Sigmoid colon (tissue), 7 donors: ENCODE measurements at regions of chr2 and their contacts with region 1.

Region 1: GRCh38 chr2:67476809-67477790 is 80.0 kb downstream of the ETAA1 start:
- DNase-seq: peak; percentile 64
- H3K4me3 ChIP-seq: no peak overlapping the region
- H3K27ac ChIP-seq: peak overlapping the region in 2 of 4 donors; percentile 56 to 66
- H3K4me1 ChIP-seq: peaks cover 0 to 26% (median 18%) of the 10 kb centered on the region in 4 donors
- H3K27me3 ChIP-seq: no peaks in the 10 kb centered on the region
- CTCF ChIP-seq: peak in 3 of 4 experiments; percentile 34 to 47 (median 37)
- EP300 ChIP-seq: no peak
- POLR2A ChIP-seq: no peak

Region 2: GRCh38 chr2:65722028-65722778 is 1754.9 kb before region 1 on chr2:
- intact Hi-C with region 1: loop called (anchors 10 kb)
- DNase-seq: peak; percentile 81
- H3K4me3 ChIP-seq: no peak overlapping the region
- H3K27ac ChIP-seq: no peak overlapping the region
- H3K4me1 ChIP-seq: peaks cover 0 to 6% (median 0%) of the 10 kb centered on the region in 4 donors
- H3K27me3 ChIP-seq: no peaks in the 10 kb centered on the region
- CTCF ChIP-seq: peak in 3 of 4 experiments; percentile 9 to 37 (median 29)
- EP300 ChIP-seq: no peak
- POLR2A ChIP-seq: no peak

Region 3: GRCh38 chr2:67463810-67464209 is 13.3 kb before region 1 on chr2:
- intact Hi-C with region 1: no loop called
- DNase-seq: no peak
- H3K4me3 ChIP-seq: no peak overlapping the region
- H3K27ac ChIP-seq: no peak overlapping the region
- H3K4me1 ChIP-seq: no peaks in the 10 kb centered on the region
- H3K27me3 ChIP-seq: no peaks in the 10 kb centered on the region
- CTCF ChIP-seq: no peak
- EP300 ChIP-seq: no peak
- POLR2A ChIP-seq: no peak